GM13976 (cell line): ENCODE measurements at regions of chr2 and their contacts with region 1.

Region 1: GRCh38 chr2:234500394-234501006 is 3.6 kb upstream of the ARL4C start:
- DNase-seq: peak; percentile 62
- CTCF ChIP-seq: peak; percentile 55

Region 2: DNA sequence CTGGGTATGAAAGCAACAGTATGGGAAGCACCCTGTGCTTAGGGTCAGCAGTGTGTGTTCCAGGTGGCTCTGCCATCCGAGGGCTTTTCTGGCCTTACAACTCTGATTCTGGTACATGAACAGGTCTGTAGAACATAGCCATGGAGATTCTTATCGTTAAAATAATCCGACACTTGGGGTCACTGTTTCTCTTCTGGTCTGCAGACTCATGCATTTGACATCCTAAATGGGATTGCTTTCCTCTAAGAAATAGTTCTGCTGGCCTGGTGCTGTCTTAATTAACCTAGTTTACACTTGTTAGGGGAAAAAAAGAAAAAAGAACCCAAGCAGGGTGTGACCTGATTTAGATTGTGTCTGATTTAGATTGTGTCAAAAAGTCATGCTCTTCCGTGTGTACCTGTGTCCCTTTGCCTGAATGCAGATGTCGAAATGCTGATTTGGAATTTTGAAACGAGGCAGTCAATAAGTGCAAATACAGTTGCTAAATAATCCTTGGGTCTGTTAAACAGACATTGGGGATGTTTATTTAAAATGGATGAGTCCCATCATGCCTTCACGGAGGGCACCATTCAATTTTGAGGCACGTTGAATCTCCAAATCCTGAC is 523.7 kb before region 1 on chr2:
- in situ Hi-C with region 1: loop called (anchors 25 kb)
- DNase-seq: peak; percentile 47
- CTCF ChIP-seq: no peak

Region 3: GRCh38 chr2:234135720-234136221 is 364.7 kb before region 1 on chr2:
- in situ Hi-C with region 1: loop called (anchors 10 kb)
- DNase-seq: peak; percentile 71
- CTCF ChIP-seq: peak; percentile 44

Region 4: DNA sequence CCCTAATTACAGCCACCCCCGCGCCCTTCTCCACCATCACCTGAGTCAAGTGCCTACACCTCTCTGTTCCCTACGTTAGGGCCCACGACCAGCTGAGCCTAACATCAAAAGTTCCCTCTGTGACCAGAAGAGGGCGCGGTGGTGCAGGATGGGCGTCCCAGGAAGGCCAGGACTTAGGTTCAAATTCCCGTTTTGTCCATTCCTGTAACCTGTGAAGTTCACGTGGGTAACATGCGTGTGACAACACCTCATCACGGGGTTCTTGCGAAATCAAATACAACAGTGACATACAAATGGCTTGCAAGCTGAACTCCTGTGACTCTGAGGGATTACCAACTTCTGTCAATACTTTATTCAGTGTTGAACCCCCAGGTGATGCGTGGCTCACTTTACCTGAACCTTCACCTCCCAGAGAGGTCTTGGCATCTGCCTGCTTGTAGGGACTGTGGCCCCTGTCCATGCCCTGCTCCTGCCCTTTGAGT is 211.5 kb before region 1 on chr2:
- in situ Hi-C with region 1: no loop called
- DNase-seq: peak; percentile 57
- CTCF ChIP-seq: peak; percentile 83